Heart left ventricle (tissue), 16 donors: ENCODE measurements at regions of chr3 and their contacts with region 1.

Region 1: GRCh38 chr3:167734498-167735232 is at the start of gene PDCD10:
- DNase-seq: peak; percentile 98 to 99 (median 98)
- ATAC-seq: peak; percentile 96 to 97 (median 96)
- H3K4me3 ChIP-seq: peak within 1 kb of the TSS; percentile 72 to 94 (median 84)
- H3K27ac ChIP-seq: peak within 1 kb of the TSS; percentile 81 to 95 (median 93)
- H3K4me1 ChIP-seq: peaks cover 4 to 55% (median 33%) of the 10 kb centered on the region in 12 donors
- H3K27me3 ChIP-seq: no peaks in the 10 kb centered on the region
- CTCF ChIP-seq: no peak
- POLR2A ChIP-seq: peak in 1 of 2 donors; percentile 71
- total RNA-seq, gene PDCD10: 32.1 to 53.9 (median 41.1) TPM

Region 2: GRCh38 chr3:167684388-167684993 is 50.2 kb before region 1 on chr3:
- intact Hi-C with region 1: no loop called
- DNase-seq: peak in 2 of 5 donors; percentile 40
- ATAC-seq: peak in 3 of 4 donors; percentile 49 to 63 (median 53)
- H3K4me3 ChIP-seq: no peak overlapping the region
- H3K27ac ChIP-seq: no peak overlapping the region
- H3K4me1 ChIP-seq: no peaks in the 10 kb centered on the region
- H3K27me3 ChIP-seq: no peaks in the 10 kb centered on the region
- CTCF ChIP-seq: peak; percentile 62 to 85 (median 80)
- POLR2A ChIP-seq: no peak

Region 3: DNA sequence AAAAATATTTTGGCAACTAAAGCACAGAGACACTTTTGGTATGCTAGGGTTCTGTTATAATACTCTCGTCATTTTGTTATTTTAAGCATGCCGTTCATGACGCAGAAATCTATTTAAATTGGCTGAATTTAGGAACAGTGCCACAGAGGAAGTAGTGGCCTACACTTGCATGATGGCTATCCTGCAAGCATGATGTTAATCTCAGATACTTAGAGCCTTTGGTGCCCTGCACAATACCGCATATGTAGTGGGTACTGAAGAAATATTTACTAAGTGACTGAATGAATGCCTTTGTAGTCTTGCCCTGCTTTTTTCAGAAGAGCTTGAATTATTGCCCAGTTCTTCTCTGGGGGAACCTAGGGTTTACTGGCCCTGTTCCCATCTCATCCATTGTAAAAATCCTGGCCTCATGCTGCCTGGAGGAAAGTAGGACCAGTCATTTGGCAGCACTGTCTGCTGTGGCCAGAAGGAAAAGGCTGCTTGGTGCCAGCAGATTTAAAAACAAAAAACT is 79.8 kb after region 1 on chr3:
- intact Hi-C with region 1: loop called in 6 of 10 experiments (anchors 2 to 10 kb)
- DNase-seq: peak in 4 of 5 donors; percentile 38 to 62 (median 46)
- ATAC-seq: peak; percentile 90 to 96 (median 93)
- H3K4me3 ChIP-seq: no peak overlapping the region
- H3K27ac ChIP-seq: peak overlapping the region; percentile 34 to 87 (median 70)
- H3K4me1 ChIP-seq: peaks cover 12 to 44% (median 28%) of the 10 kb centered on the region in 12 donors
- H3K27me3 ChIP-seq: no peaks in the 10 kb centered on the region
- CTCF ChIP-seq: peak in 2 of 12 donors; percentile 8 to 16
- POLR2A ChIP-seq: no peak

Region 4: GRCh38 chr3:167876620-167877281 is 142.1 kb after region 1 on chr3:
- intact Hi-C with region 1: loop called in 3 of 10 experiments (anchors 5 to 10 kb)
- DNase-seq: peak in 1 of 5 donors; percentile 17
- ATAC-seq: peak; percentile 53 to 84 (median 82)
- H3K4me3 ChIP-seq: no peak overlapping the region
- H3K27ac ChIP-seq: peak overlapping the region in 11 of 12 donors; percentile 41 to 87 (median 72)
- H3K4me1 ChIP-seq: peaks cover 0 to 58% (median 44%) of the 10 kb centered on the region in 12 donors
- H3K27me3 ChIP-seq: no peaks in the 10 kb centered on the region
- CTCF ChIP-seq: no peak
- POLR2A ChIP-seq: no peak

Region 5: DNA sequence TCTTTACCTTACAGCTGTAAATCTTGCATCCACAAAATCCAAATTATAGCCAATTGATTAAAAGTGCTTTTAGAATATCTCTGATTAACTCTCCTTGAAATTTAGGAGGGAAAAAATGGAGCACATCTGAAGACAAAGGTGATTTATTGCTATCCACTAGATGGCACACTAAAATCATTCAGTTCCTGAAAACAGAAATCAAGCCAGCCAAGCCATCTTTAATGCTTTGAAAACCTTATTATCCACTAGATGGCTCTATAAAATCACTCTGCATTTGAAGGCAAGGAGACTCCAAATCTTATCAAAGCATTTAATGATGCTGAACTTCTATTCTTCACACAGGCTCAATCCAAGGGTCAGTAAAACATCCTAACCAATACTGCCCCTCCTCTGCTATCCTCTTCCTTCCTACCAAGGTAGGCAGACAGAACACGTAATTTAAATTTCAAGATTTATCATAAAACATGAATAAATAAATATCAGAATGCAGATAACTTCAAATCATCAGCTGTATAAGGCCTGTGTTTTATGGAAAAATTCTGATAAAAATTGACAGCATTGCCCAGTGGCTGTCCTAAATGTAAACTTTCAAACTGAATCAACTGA is 312.6 kb after region 1 on chr3:
- intact Hi-C with region 1: loop called in 1 of 10 experiments (anchors 10 kb)
- DNase-seq: no peak
- ATAC-seq: peak; percentile 33 to 67 (median 64)
- H3K4me3 ChIP-seq: no peak overlapping the region
- H3K27ac ChIP-seq: no peak overlapping the region
- H3K4me1 ChIP-seq: peaks cover 0 to 62% (median 34%) of the 10 kb centered on the region in 12 donors
- H3K27me3 ChIP-seq: no peaks in the 10 kb centered on the region
- CTCF ChIP-seq: peak; percentile 67 to 96 (median 90)
- POLR2A ChIP-seq: no peak